Calu3 (cell line): ENCODE measurements at regions of chr7 and their contacts with region 1.

Region 1: GRCh38 chr7:37833107-37833817 is 15.1 kb upstream of the NME8 start:
- DNase-seq: peak; percentile 59
- H3K4me3 Mint-ChIP-seq: peak overlapping the region; percentile 72
- H3K27ac Mint-ChIP-seq: no peak overlapping the region
- H3K4me1 Mint-ChIP-seq: peaks cover 16% of the 10 kb centered on the region
- H3K27me3 Mint-ChIP-seq: peaks cover 25% of the 10 kb centered on the region
- CTCF ChIP-seq: peak; percentile 67

Region 2: GRCh38 chr7:37510043-37510634 is 323.1 kb before region 1 on chr7:
- CTCF ChIA-PET with region 1: no interaction called
- intact Hi-C with region 1: loop called (anchors 10 kb)
- DNase-seq: peak; percentile 27
- H3K4me3 Mint-ChIP-seq: no peak overlapping the region
- H3K27ac Mint-ChIP-seq: no peak overlapping the region
- H3K4me1 Mint-ChIP-seq: no peaks in the 10 kb centered on the region
- H3K27me3 Mint-ChIP-seq: peaks cover 11% of the 10 kb centered on the region
- CTCF ChIP-seq: peak; percentile 61

Region 3: DNA sequence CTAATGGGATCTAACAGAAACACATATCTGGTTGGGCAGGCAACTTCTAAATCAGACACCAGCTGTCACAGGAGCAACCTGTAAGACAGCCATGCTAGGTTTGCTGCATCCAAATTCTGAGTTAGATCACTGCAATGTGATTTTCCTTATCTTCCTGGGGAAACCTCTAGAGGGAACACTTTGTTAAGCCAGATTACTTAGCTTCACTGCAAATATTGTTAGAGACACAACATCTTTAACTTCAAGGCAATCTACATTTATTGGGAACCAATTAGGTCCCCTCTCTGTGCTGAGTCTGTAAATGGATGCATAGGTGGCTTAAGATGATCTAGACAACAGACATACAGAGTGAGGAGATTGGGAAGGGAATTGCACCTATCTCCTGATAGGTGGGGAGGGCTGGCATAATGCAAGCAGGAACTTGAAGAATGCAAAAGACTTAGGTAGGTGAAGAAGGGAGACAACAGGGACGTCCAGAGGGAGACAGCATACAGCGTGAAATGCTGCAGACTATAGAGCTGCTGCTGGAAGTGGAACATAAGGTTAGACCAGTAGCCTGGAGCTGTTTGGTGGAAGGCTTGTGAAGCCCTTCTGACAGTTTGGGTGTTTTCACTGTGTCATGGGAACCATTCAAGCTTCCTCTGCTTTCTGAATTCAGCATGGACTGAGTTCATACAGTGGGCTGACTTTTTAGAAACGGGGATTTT is 274.8 kb before region 1 on chr7:
- CTCF ChIA-PET with region 1: no interaction called
- intact Hi-C with region 1: no loop called
- DNase-seq: no peak
- H3K4me3 Mint-ChIP-seq: no peak overlapping the region
- H3K27ac Mint-ChIP-seq: no peak overlapping the region
- H3K4me1 Mint-ChIP-seq: no peaks in the 10 kb centered on the region
- H3K27me3 Mint-ChIP-seq: no peaks in the 10 kb centered on the region
- CTCF ChIP-seq: no peak

Region 4: DNA sequence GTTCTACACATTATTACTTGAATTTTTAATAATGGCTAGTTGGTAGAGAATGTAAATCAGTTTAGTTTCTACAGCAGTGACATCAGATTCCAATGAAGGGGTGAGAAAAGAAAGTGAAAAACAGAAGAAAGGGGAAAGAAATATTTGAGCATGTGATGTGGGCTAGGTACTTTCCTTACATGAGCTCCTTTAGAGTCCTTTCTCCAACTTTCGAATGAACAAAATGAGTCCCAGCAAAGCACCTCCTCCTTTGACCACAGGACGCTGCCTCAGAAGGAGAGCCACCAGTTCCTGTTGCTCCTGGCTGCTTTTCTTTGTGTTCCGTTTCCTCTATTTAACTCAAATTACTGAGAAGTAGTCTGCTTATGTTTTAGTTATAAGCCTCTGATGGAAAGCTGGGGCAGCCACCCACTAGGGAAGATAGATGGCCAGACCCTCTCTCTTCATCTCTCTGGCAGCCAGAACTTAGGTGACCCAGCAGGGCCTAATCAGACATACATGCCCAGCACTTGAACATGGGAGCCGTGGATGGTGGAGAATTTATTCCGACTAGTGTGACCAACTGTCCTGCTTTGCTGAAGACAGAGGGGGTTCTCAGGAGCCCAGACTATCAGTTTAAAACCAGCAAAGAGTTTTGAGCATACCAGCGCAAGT is 67.3 kb before region 1 on chr7:
- CTCF ChIA-PET with region 1: no interaction called
- intact Hi-C with region 1: no loop called
- DNase-seq: no peak
- H3K4me3 Mint-ChIP-seq: no peak overlapping the region
- H3K27ac Mint-ChIP-seq: no peak overlapping the region
- H3K4me1 Mint-ChIP-seq: no peaks in the 10 kb centered on the region
- H3K27me3 Mint-ChIP-seq: no peaks in the 10 kb centered on the region
- CTCF ChIP-seq: no peak